ENCODE measurements at regions of chr2 and their contacts with region 1.

Region 1: GRCh38 chr2:18749912-18750526 is 160.7 kb upstream of the NT5C1B start:
- DNase-seq: peak; percentile 53
- H3K4me3 ChIP-seq: no peak overlapping the region
- H3K27ac ChIP-seq: no peak overlapping the region
- H3K4me1 ChIP-seq: no peaks in the 10 kb centered on the region
- CTCF ChIP-seq: peak; percentile 94

Region 2: GRCh38 chr2:19362755-19363473 is 612.9 kb after region 1 on chr2:
- CTCF ChIA-PET with region 1: interaction called, 3 read pairs
- POLR2A ChIA-PET with region 1: no interaction called
- intact Hi-C with region 1: loop called (anchors 1 kb)
- DNase-seq: peak; percentile 67
- H3K4me3 ChIP-seq: peak overlapping the region; percentile 63
- H3K27ac ChIP-seq: no peak overlapping the region
- H3K4me1 ChIP-seq: no peaks in the 10 kb centered on the region
- CTCF ChIP-seq: peak; percentile 77